ENCODE measurements at regions of chr17 and their contacts with region 1.

Region 1: GRCh38 chr17:59427425-59427921 is 96.0 kb downstream of the YPEL2 start:
- DNase-seq: peak; percentile 57
- ATAC-seq: peak; percentile 65
- H3K4me3 Mint-ChIP-seq: no peak overlapping the region
- H3K27ac Mint-ChIP-seq: no peak overlapping the region
- H3K4me1 Mint-ChIP-seq: peaks cover 43% of the 10 kb centered on the region
- H3K27me3 Mint-ChIP-seq: no peaks in the 10 kb centered on the region

Region 2: DNA sequence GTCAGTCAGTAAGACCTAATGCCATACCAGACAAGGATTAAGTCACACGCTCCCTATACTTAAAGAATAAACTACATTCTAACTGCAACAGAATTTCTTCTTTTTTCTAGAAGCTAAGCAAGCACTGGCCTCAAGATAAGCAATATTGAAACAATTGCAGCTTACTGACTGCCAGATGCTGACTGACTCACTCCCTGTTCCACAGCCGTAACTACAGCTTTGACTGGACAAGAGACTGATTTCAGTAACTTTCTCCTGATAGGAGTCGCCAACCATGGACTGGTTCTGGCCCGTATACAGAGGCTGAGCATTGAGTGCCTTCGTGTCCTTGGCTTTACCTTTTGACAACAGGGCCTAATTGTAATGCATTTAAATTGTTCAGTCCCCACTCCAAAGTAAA is 388.7 kb before region 1 on chr17:
- CTCF ChIA-PET with region 1: no interaction called
- DNase-seq: peak; percentile 43
- ATAC-seq: no peak
- H3K4me3 Mint-ChIP-seq: no peak overlapping the region
- H3K27ac Mint-ChIP-seq: no peak overlapping the region
- H3K4me1 Mint-ChIP-seq: peaks cover 3% of the 10 kb centered on the region
- H3K27me3 Mint-ChIP-seq: no peaks in the 10 kb centered on the region

Region 3: DNA sequence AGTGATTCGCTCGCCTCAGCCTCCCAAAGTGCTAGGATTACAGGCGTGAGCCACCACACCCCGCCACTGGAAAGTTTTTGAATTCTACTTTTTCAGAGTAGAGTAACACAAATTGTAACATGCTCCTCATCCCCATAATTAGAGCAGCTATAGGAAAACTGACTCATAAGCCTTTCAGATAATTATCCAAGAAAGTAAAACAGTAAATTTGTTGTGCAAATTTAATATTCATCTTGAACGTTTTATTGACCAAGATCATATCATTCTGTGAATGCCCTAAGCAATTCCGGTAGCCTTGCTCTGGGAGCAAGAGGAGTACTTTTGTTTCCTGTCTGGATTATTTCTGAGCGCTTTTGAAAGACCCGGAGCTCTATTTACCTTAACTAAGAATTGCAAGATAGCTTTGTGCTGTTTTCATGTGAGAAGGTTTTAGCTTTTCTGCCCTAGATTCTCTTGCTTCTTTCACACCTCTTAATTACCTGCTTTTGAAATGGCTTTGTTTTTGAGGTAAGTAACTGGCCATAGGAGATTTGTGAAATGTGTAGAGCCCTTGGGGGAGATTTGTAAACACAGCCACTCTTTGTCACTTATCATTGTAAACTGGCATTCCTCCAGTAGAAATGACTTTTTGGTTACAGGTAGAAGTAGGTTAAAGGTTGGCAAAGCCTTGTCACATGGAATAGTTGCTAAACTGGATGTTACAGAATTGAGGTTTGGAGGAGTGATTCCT is 130.5 kb before region 1 on chr17:
- CTCF ChIA-PET with region 1: no interaction called
- DNase-seq: no peak
- ATAC-seq: no peak
- H3K4me3 Mint-ChIP-seq: no peak overlapping the region
- H3K27ac Mint-ChIP-seq: no peak overlapping the region
- H3K4me1 Mint-ChIP-seq: no peaks in the 10 kb centered on the region
- H3K27me3 Mint-ChIP-seq: peaks cover 30% of the 10 kb centered on the region

Region 4: GRCh38 chr17:59415397-59415796 is 12.1 kb before region 1 on chr17:
- CTCF ChIA-PET with region 1: interaction called, 10 read pairs
- DNase-seq: no peak
- ATAC-seq: no peak
- H3K4me3 Mint-ChIP-seq: no peak overlapping the region
- H3K27ac Mint-ChIP-seq: peak overlapping the region; percentile 81
- H3K4me1 Mint-ChIP-seq: peaks cover 61% of the 10 kb centered on the region
- H3K27me3 Mint-ChIP-seq: no peaks in the 10 kb centered on the region

Region 5: GRCh38 chr17:59451706-59452105 is 24.2 kb after region 1 on chr17:
- CTCF ChIA-PET with region 1: no interaction called
- DNase-seq: no peak
- ATAC-seq: no peak
- H3K4me3 Mint-ChIP-seq: no peak overlapping the region
- H3K27ac Mint-ChIP-seq: no peak overlapping the region
- H3K4me1 Mint-ChIP-seq: no peaks in the 10 kb centered on the region
- H3K27me3 Mint-ChIP-seq: peaks cover 11% of the 10 kb centered on the region

Measured in activated CD8-positive, alpha-beta memory T cell treated with anti-CD3 and anti-CD28 coated beads, Interleukin-2, amount 10 ng/mL, durations not matched to agents 7 days and 5 days (primary cell).